ENCODE measurements at regions of chr6 and their contacts with region 1.

Region 1: DNA sequence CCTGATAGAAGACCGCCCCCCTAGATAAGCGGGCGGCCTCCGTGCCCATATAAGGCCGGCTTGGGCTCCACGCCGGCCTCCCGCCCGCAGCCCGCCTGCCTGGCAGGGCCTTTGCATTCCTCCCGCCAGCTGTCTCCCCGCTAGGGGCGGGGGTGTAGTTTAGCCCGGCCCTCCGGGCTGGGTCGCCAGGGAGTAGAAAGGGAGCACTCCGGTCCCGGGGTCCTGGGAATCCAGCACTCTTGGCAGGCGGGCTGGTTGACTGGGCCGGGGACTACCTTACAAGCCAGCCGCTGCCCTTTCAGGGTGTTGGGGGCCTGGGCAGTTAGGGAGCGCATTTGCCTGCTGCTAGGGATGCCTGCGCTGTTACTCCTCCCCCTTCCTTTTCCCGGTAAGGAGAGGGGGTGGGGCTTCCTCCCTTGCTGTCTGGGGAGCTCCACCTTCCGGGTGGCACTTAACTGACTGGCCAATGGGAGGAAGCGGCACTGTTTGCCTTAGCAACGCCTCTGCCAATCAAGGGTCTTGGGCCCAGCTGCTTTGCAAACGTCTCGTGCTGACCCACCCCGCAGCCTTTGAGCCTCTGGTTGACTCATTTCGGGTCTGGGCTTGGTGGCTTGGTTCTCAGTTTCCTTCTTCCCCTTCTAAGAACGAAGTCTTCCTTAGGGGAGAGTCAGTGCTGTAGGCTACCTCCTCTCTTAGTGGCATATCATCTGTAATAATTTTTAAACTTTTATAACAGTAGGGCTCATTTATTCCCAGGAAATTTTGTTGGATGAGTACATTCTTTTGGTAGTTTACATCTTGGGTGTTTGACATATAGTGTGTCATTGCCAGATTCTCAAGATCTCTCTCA is 3.4 kb downstream of the SRF start:
- DNase-seq: peak; percentile 96
- ATAC-seq: peak; percentile 66
- H3K4me3 ChIP-seq: peak overlapping the region in 4 of 5 experiments; percentile 35 to 47 (median 38)
- H3K4me3 Mint-ChIP-seq: peak overlapping the region; percentile 85
- H3K27ac ChIP-seq: peak overlapping the region; percentile 78 to 90
- H3K27ac Mint-ChIP-seq: peak overlapping the region; percentile 95
- H3K4me1 ChIP-seq: peaks cover 35 to 49% of the 10 kb centered on the region in 2 donors
- H3K4me1 Mint-ChIP-seq: peaks cover 46% of the 10 kb centered on the region
- H3K27me3 ChIP-seq: peaks cover 0 to 2% (median 0%) of the 10 kb centered on the region in 4 experiments
- H3K27me3 Mint-ChIP-seq: no peaks in the 10 kb centered on the region
- CTCF ChIP-seq: no peak

Region 2: GRCh38 chr6:42572523-42572922 is 602.0 kb before region 1 on chr6:
- CTCF ChIA-PET with region 1: no interaction called
- POLR2A ChIA-PET with region 1: no interaction called
- intact Hi-C with region 1: loop called (anchors 5 kb)
- DNase-seq: peak; percentile 88
- ATAC-seq: peak; percentile 98
- H3K4me3 ChIP-seq: peak overlapping the region in 1 of 5 experiments; percentile 11
- H3K4me3 Mint-ChIP-seq: peak overlapping the region; percentile 3
- H3K27ac ChIP-seq: peak overlapping the region; percentile 51 to 68
- H3K27ac Mint-ChIP-seq: peak overlapping the region; percentile 75
- H3K4me1 ChIP-seq: peaks cover 28 to 31% of the 10 kb centered on the region in 2 donors
- H3K4me1 Mint-ChIP-seq: peaks cover 36% of the 10 kb centered on the region
- H3K27me3 ChIP-seq: no peaks in the 10 kb centered on the region
- H3K27me3 Mint-ChIP-seq: no peaks in the 10 kb centered on the region
- CTCF ChIP-seq: no peak

Region 3: DNA sequence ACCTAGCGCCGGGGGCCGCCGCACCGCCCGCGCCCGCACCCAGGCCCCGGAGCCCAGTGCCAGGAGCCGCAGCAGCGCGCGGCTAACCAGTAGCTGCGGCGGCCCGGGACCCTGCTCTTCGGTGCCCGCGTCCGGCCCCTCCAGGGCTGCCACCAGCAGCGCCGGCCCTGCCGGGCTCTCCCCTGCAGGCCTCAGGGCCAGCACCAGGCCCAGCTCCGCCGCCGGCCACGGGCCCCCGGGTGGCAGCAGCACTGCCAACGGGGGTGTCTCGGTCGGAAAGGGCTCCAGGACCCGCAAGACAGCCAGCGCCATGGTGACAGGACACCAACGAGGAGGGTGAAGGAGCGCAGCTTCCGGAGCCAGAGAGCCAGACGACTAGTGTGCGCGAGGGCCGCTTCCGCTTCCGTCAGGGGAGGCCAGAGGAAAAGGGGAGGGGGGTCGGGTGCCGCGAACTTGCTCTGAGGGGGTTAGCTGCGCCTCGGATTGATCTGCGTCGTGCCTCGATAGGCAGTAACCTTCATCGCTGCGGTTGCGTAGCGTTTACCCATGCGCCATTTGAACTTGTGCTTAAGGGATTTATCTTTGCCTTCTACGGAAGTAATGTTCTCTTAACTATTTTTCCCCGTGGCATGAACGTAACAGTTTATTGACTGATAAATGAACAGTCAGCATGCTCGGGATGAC is 195.5 kb before region 1 on chr6 and contains the start of gene PEX6:
- CTCF ChIA-PET with region 1: no interaction called
- POLR2A ChIA-PET with region 1: interaction called, 3 read pairs
- intact Hi-C with region 1: loop called (anchors 1 kb)
- DNase-seq: peak; percentile 95
- ATAC-seq: peak; percentile 94
- H3K4me3 ChIP-seq: peak within 1 kb of the TSS; percentile 71 to 88 (median 80)
- H3K4me3 Mint-ChIP-seq: peak within 1 kb of the TSS; percentile 98
- H3K27ac ChIP-seq: peak within 1 kb of the TSS; percentile 73 to 85
- H3K27ac Mint-ChIP-seq: peak within 1 kb of the TSS; percentile 98
- H3K4me1 ChIP-seq: peaks cover 19 to 30% of the 10 kb centered on the region in 2 donors
- H3K4me1 Mint-ChIP-seq: peaks cover 38% of the 10 kb centered on the region
- H3K27me3 ChIP-seq: no peaks in the 10 kb centered on the region
- H3K27me3 Mint-ChIP-seq: no peaks in the 10 kb centered on the region
- CTCF ChIP-seq: no peak
- total RNA-seq, gene PEX6: 16.6 and 17.1 TPM in 2 replicates

Region 4: GRCh38 chr6:43205849-43206248 is 31.4 kb after region 1 on chr6:
- CTCF ChIA-PET with region 1: no interaction called
- POLR2A ChIA-PET with region 1: interaction called, 10 read pairs
- intact Hi-C with region 1: no loop called
- DNase-seq: no peak
- ATAC-seq: no peak
- H3K4me3 ChIP-seq: no peak overlapping the region
- H3K4me3 Mint-ChIP-seq: no peak overlapping the region
- H3K27ac ChIP-seq: no peak overlapping the region
- H3K27ac Mint-ChIP-seq: no peak overlapping the region
- H3K4me1 ChIP-seq: no peaks in the 10 kb centered on the region
- H3K4me1 Mint-ChIP-seq: no peaks in the 10 kb centered on the region
- H3K27me3 ChIP-seq: no peaks in the 10 kb centered on the region
- H3K27me3 Mint-ChIP-seq: no peaks in the 10 kb centered on the region
- CTCF ChIP-seq: no peak

Region 5: GRCh38 chr6:43383021-43383667 is 208.7 kb after region 1 on chr6:
- CTCF ChIA-PET with region 1: interaction called, 3 read pairs
- POLR2A ChIA-PET with region 1: interaction called, 4 read pairs
- intact Hi-C with region 1: loop called (anchors 1 kb)
- DNase-seq: no peak
- ATAC-seq: no peak
- H3K4me3 ChIP-seq: peak overlapping the region in 2 of 5 experiments; percentile 18 to 42
- H3K4me3 Mint-ChIP-seq: peak overlapping the region; percentile 85
- H3K27ac ChIP-seq: peak overlapping the region; percentile 91 to 94
- H3K27ac Mint-ChIP-seq: peak overlapping the region; percentile 98
- H3K4me1 ChIP-seq: peaks cover 68 to 73% of the 10 kb centered on the region in 2 donors
- H3K4me1 Mint-ChIP-seq: peaks cover 67% of the 10 kb centered on the region
- H3K27me3 ChIP-seq: peaks cover 0 to 4% (median 2%) of the 10 kb centered on the region in 4 experiments
- H3K27me3 Mint-ChIP-seq: peaks cover 12% of the 10 kb centered on the region
- CTCF ChIP-seq: no peak

Region 6: DNA sequence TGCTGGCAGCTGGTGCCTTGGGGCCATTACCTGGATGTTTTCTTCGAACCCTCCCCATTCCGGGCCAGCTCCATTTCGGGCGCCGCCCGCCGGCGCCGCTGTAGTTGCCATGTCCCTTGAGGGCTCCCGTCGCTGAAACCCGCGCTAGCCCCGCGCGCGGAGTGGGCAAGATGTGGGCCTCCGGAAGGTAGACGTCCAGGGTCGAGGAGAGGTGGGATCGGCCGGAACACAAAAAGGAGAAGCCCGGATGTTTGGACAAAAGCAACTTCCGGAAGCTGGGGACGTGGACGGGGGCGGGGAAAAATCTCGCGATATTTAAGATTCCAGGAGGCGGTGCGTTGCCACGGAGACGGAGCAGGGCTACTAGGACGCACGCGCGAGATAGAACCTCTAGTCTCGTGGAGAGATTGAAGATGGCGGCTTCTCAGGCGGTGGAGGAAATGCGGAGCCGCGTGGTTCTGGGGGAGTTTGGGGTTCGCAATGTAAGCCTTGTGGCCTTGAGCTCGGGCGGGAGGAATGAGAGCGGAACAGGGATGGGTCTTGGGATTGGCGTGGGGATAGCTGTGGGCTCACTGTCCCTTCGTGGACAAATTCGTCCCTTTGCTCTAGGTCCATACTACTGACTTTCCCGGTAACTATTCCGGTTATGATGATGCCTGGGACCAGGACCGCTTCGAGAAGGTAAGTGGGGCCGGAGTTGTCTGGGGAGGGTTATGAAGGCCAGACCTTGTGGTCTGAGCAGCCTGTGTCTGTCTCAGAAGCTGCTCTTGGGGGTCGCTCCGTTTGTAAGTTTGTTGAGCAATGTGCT is 342.4 kb after region 1 on chr6 and contains the starts of genes POLR1C and YIPF3:
- CTCF ChIA-PET with region 1: no interaction called
- POLR2A ChIA-PET with region 1: no interaction called
- intact Hi-C with region 1: loop called (anchors 1 kb)
- DNase-seq: peak; percentile 97
- ATAC-seq: peak; percentile 96
- H3K4me3 ChIP-seq: peak within 1 kb of the TSS; percentile 78 to 98 (median 91)
- H3K4me3 Mint-ChIP-seq: no peak within 1 kb of the TSS
- H3K27ac ChIP-seq: peak within 1 kb of the TSS; percentile 65 to 91
- H3K27ac Mint-ChIP-seq: no peak within 1 kb of the TSS
- H3K4me1 ChIP-seq: peaks cover 28 to 36% of the 10 kb centered on the region in 2 donors
- H3K4me1 Mint-ChIP-seq: peaks cover 27% of the 10 kb centered on the region
- H3K27me3 ChIP-seq: no peaks in the 10 kb centered on the region
- H3K27me3 Mint-ChIP-seq: no peaks in the 10 kb centered on the region
- CTCF ChIP-seq: no peak
- total RNA-seq, gene POLR1C: 42.0 and 43.3 TPM in 2 replicates
- total RNA-seq, gene YIPF3: 82.1 and 92.6 TPM in 2 replicates